ENCODE measurements at regions of chr11 and their contacts with region 1.

Region 1: GRCh38 chr11:89604281-89604680 is 105.8 kb upstream of the TRIM77 start:
- DNase-seq: no peak
- ATAC-seq: no peak
- H3K4me3 ChIP-seq: no peak overlapping the region
- H3K27ac ChIP-seq: no peak overlapping the region
- H3K4me1 ChIP-seq: no peaks in the 10 kb centered on the region
- H3K27me3 ChIP-seq: no peaks in the 10 kb centered on the region
- CTCF ChIP-seq: no peak
- EP300 ChIP-seq: no peak
- POLR2A ChIP-seq: no peak
- RAD21 ChIP-seq: no peak

Region 2: GRCh38 chr11:90332415-90332814 is 728.1 kb after region 1 on chr11:
- CTCF ChIA-PET with region 1: no interaction called
- POLR2A ChIA-PET with region 1: no interaction called
- in situ Hi-C with region 1: no loop called
- intact Hi-C with region 1: loop called (anchors 10 kb)
- DNase-seq: no peak
- ATAC-seq: no peak
- H3K4me3 ChIP-seq: no peak overlapping the region
- H3K27ac ChIP-seq: no peak overlapping the region
- H3K4me1 ChIP-seq: no peaks in the 10 kb centered on the region
- H3K27me3 ChIP-seq: no peaks in the 10 kb centered on the region
- CTCF ChIP-seq: no peak
- EP300 ChIP-seq: no peak
- POLR2A ChIP-seq: no peak
- RAD21 ChIP-seq: no peak

Measured in K562 (cell line).